CD8-positive, alpha-beta memory T cell (primary cell): ENCODE measurements at regions of chr11 and their contacts with region 1.

Region 1: GRCh38 chr11:123062158-123062891 is 389 bp upstream of the HSPA8 start:
- DNase-seq: peak; percentile 98 to 100 (median 100)
- H3K4me3 ChIP-seq: peak overlapping the region; percentile 96
- H3K4me3 Mint-ChIP-seq: peak overlapping the region; percentile 95 to 100 (median 99)
- H3K27ac ChIP-seq: peak overlapping the region; percentile 96
- H3K27ac Mint-ChIP-seq: peak overlapping the region; percentile 93 to 100 (median 98)
- H3K4me1 ChIP-seq: peaks cover 53% of the 10 kb centered on the region
- H3K4me1 Mint-ChIP-seq: peaks cover 63 to 68% (median 66%) of the 10 kb centered on the region in 3 donors
- H3K27me3 ChIP-seq: no peaks in the 10 kb centered on the region
- H3K27me3 Mint-ChIP-seq: peaks cover 0 to 6% of the 10 kb centered on the region in 2 donors

Region 2: GRCh38 chr11:122832721-122833470 is 229.4 kb before region 1 on chr11:
- CTCF ChIA-PET with region 1: interaction called, 3 read pairs
- POLR2A ChIA-PET with region 1: interaction called, 14 read pairs
- DNase-seq: no peak
- H3K4me3 ChIP-seq: no peak overlapping the region
- H3K4me3 Mint-ChIP-seq: peak overlapping the region in 4 of 7 donors; percentile 6 to 37 (median 22)
- H3K27ac ChIP-seq: no peak overlapping the region
- H3K27ac Mint-ChIP-seq: peak overlapping the region; percentile 25 to 85 (median 65)
- H3K4me1 ChIP-seq: peaks cover 8% of the 10 kb centered on the region
- H3K4me1 Mint-ChIP-seq: peaks cover 45 to 53% (median 47%) of the 10 kb centered on the region in 3 donors
- H3K27me3 ChIP-seq: no peaks in the 10 kb centered on the region
- H3K27me3 Mint-ChIP-seq: no peaks in the 10 kb centered on the region

Region 3: DNA sequence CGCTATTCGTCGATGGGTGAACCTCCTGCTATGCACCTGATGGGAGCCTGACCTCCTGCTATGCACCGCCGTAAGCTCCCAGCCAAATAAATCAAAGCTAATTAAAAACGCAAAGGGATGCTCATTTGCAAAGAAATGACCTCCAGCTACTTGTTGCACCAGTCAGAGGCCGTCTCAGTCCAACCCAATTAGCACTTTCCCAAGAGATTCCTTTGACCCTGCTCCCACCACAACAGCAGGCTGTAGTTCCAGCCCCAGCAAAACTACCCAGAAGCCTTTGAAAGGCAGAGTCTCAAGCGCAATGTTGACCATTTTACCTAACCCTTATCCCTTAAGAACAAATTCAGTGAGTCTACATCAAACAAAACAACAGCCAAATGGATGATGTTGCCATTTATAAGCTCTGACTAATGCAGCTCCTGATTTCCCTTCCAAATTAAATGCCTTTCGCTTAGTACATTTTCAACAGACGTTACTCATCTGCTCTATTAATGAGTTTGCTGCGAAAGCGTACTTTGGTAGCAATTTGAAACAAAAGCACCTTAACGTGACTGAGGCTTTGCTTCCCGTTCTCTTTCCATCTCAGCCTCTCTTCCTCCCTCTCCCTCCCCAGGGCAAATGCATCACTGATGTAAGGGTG is 63.5 kb before region 1 on chr11:
- CTCF ChIA-PET with region 1: no interaction called
- POLR2A ChIA-PET with region 1: no interaction called
- DNase-seq: no peak
- H3K4me3 ChIP-seq: no peak overlapping the region
- H3K4me3 Mint-ChIP-seq: no peak overlapping the region
- H3K27ac ChIP-seq: no peak overlapping the region
- H3K27ac Mint-ChIP-seq: no peak overlapping the region
- H3K4me1 ChIP-seq: no peaks in the 10 kb centered on the region
- H3K4me1 Mint-ChIP-seq: no peaks in the 10 kb centered on the region
- H3K27me3 ChIP-seq: no peaks in the 10 kb centered on the region
- H3K27me3 Mint-ChIP-seq: peaks cover 16 to 64% of the 10 kb centered on the region in 2 donors

Region 4: GRCh38 chr11:123083623-123084029 is 21.3 kb after region 1 on chr11:
- CTCF ChIA-PET with region 1: interaction called, 184 read pairs
- POLR2A ChIA-PET with region 1: interaction called, 73 read pairs
- DNase-seq: peak in 4 of 5 donors; percentile 45 to 84 (median 52)
- H3K4me3 ChIP-seq: peak overlapping the region; percentile 20
- H3K4me3 Mint-ChIP-seq: peak overlapping the region; percentile 23 to 76 (median 57)
- H3K27ac ChIP-seq: no peak overlapping the region
- H3K27ac Mint-ChIP-seq: peak overlapping the region; percentile 68 to 91 (median 78)
- H3K4me1 ChIP-seq: peaks cover 48% of the 10 kb centered on the region
- H3K4me1 Mint-ChIP-seq: peaks cover 37 to 60% (median 43%) of the 10 kb centered on the region in 3 donors
- H3K27me3 ChIP-seq: no peaks in the 10 kb centered on the region
- H3K27me3 Mint-ChIP-seq: no peaks in the 10 kb centered on the region

Region 5: DNA sequence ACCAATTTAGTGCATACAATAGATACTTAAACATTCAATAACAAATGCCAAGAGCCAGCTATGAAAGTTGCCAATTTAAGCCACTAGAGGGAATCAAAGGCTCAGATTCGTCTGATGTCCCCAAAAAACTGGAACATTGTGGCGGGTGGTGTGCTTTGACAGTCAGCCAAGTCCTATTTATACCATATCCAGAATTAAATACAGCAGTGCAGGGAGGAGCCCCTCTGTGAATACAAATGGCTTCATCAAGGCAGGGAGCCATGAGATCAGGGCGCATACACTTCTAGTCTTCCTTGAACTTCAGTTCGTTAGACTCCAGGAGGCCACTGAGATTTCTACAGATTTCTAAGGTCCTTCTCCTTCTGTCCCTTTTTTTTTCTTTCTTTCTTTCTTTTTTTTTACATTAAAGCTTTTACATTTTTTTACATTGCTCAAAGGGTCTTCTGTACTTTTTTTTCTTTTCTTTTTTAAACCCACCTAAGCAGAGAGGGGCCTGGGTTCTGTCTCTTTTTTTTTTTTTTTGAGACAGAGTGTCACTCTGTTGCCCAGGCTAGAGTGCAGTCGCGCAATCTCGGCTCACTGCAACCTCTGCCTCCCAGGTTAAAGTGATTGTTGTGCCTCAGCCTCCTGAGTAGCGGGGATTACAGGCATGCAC is 41.1 kb after region 1 on chr11:
- CTCF ChIA-PET with region 1: interaction called, 110 read pairs
- POLR2A ChIA-PET with region 1: interaction called, 12 read pairs
- DNase-seq: peak in 3 of 5 donors; percentile 24 to 51 (median 40)
- H3K4me3 ChIP-seq: no peak overlapping the region
- H3K4me3 Mint-ChIP-seq: no peak overlapping the region
- H3K27ac ChIP-seq: no peak overlapping the region
- H3K27ac Mint-ChIP-seq: peak overlapping the region in 3 of 8 donors; percentile 7 to 54 (median 21)
- H3K4me1 ChIP-seq: peaks cover 9% of the 10 kb centered on the region
- H3K4me1 Mint-ChIP-seq: peaks cover 11 to 17% (median 15%) of the 10 kb centered on the region in 3 donors
- H3K27me3 ChIP-seq: no peaks in the 10 kb centered on the region
- H3K27me3 Mint-ChIP-seq: peaks cover 0 to under 1% of the 10 kb centered on the region in 2 donors

Region 6: DNA sequence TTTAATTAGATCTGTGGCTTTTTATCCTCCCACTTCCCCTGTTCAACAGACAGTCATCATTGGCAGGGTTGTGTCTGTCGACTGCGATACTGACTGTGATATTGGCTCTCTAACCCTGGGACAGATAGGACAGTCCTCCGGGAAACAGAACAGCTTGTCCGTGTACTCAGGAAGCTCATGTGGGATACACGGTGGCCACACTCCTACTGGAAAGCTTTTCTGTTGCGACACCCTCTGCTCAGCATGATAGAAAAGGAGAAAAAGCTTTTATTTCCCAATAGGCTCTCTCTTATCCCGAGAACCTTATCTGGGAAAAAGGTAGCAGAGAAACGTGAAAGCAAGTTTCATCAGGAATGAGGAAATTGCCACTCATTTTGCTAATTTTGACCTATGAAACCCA is 60.0 kb after region 1 on chr11:
- CTCF ChIA-PET with region 1: no interaction called
- POLR2A ChIA-PET with region 1: no interaction called
- DNase-seq: no peak
- H3K4me3 ChIP-seq: no peak overlapping the region
- H3K4me3 Mint-ChIP-seq: no peak overlapping the region
- H3K27ac ChIP-seq: no peak overlapping the region
- H3K27ac Mint-ChIP-seq: peak overlapping the region in 1 of 8 donors; percentile 33
- H3K4me1 ChIP-seq: no peaks in the 10 kb centered on the region
- H3K4me1 Mint-ChIP-seq: peaks cover 0 to 5% (median 0%) of the 10 kb centered on the region in 3 donors
- H3K27me3 ChIP-seq: no peaks in the 10 kb centered on the region
- H3K27me3 Mint-ChIP-seq: peaks cover 8 to 23% of the 10 kb centered on the region in 2 donors

Region 7: GRCh38 chr11:123137431-123138224 is 75.3 kb after region 1 on chr11:
- CTCF ChIA-PET with region 1: no interaction called
- POLR2A ChIA-PET with region 1: no interaction called
- DNase-seq: no peak
- H3K4me3 ChIP-seq: no peak overlapping the region
- H3K4me3 Mint-ChIP-seq: no peak overlapping the region
- H3K27ac ChIP-seq: no peak overlapping the region
- H3K27ac Mint-ChIP-seq: no peak overlapping the region
- H3K4me1 ChIP-seq: no peaks in the 10 kb centered on the region
- H3K4me1 Mint-ChIP-seq: no peaks in the 10 kb centered on the region
- H3K27me3 ChIP-seq: no peaks in the 10 kb centered on the region
- H3K27me3 Mint-ChIP-seq: peaks cover 1 to 9% of the 10 kb centered on the region in 2 donors

Region 8: GRCh38 chr11:123246749-123247495 is 184.6 kb after region 1 on chr11:
- CTCF ChIA-PET with region 1: interaction called, 11 read pairs
- POLR2A ChIA-PET with region 1: interaction called, 6 read pairs
- DNase-seq: peak; percentile 64 to 83 (median 69)
- H3K4me3 ChIP-seq: no peak overlapping the region
- H3K4me3 Mint-ChIP-seq: peak overlapping the region in 4 of 7 donors; percentile 23 to 49 (median 42)
- H3K27ac ChIP-seq: no peak overlapping the region
- H3K27ac Mint-ChIP-seq: peak overlapping the region in 3 of 8 donors; percentile 18 to 35 (median 35)
- H3K4me1 ChIP-seq: peaks cover 5% of the 10 kb centered on the region
- H3K4me1 Mint-ChIP-seq: peaks cover 5 to 7% (median 7%) of the 10 kb centered on the region in 3 donors
- H3K27me3 ChIP-seq: no peaks in the 10 kb centered on the region
- H3K27me3 Mint-ChIP-seq: peaks cover 6 to 26% of the 10 kb centered on the region in 2 donors